ENCODE measurements at regions of chrX and their contacts with region 1.

Region 1: DNA sequence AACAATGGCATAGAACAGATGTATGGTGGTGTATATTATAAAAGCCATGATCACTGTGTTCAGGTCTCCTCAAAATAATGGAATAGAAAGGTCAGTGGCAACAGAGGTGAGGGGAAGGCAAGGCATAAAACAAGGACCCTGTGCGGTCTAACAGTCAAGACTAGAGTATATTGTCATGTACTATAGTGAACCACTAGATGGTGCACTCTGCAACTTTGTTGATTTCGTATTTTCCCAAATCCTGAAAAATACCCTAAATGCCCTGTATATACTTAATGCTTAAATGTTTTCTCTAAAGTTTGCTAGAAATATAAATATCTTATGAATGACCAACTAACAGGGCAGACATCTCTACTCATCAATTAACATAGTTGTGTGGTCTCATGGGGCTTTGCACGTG is 453.0 kb downstream of the PCDH11X start:
- DNase-seq: peak; percentile 2
- ATAC-seq: peak; percentile 51; the same call in 1 of the 2 replicates
- H3K4me3 ChIP-seq: no peak overlapping the region
- H3K27ac ChIP-seq: no peak overlapping the region
- H3K4me1 ChIP-seq: no peaks in the 10 kb centered on the region
- H3K27me3 ChIP-seq: no peaks in the 10 kb centered on the region
- CTCF ChIP-seq: peak; percentile 42
- POLR2A ChIP-seq: no peak
- RAD21 ChIP-seq: peak; percentile 42

Region 2: DNA sequence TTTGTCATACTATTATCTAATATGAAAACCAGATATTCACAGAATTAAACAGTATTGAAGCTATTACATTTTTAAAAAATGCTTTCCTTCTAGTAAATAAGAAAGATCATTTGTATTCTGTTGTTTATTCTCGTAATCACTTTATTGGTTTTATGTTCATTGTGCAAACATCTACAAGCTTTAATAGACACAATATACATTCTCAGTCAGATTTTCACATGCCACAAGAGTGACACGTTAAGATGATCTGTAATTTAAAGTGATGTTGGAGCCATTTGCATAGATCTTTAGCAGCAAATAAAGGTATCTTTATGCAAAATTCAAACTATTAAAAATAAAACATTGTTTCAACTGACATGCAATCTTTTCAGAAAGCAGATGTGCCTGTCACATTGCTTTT is 16.9 kb after region 1 on chrX:
- CTCF ChIA-PET with region 1: no interaction called
- POLR2A ChIA-PET with region 1: no interaction called
- dilution Hi-C with region 1: no loop called
- in situ Hi-C with region 1: no loop called
- intact Hi-C with region 1: no loop called
- DNase-seq: no peak
- ATAC-seq: no peak
- H3K4me3 ChIP-seq: no peak overlapping the region
- H3K27ac ChIP-seq: no peak overlapping the region
- H3K4me1 ChIP-seq: no peaks in the 10 kb centered on the region
- H3K27me3 ChIP-seq: no peaks in the 10 kb centered on the region
- CTCF ChIP-seq: no peak
- POLR2A ChIP-seq: no peak
- RAD21 ChIP-seq: no peak

Region 3: GRCh38 chrX:92260099-92260498 is 27.9 kb after region 1 on chrX:
- CTCF ChIA-PET with region 1: no interaction called
- POLR2A ChIA-PET with region 1: no interaction called
- dilution Hi-C with region 1: no loop called
- in situ Hi-C with region 1: no loop called
- intact Hi-C with region 1: no loop called
- DNase-seq: no peak
- ATAC-seq: no peak
- H3K4me3 ChIP-seq: no peak overlapping the region
- H3K27ac ChIP-seq: no peak overlapping the region
- H3K4me1 ChIP-seq: no peaks in the 10 kb centered on the region
- H3K27me3 ChIP-seq: no peaks in the 10 kb centered on the region; the same call in 1 of the 2 replicates
- CTCF ChIP-seq: no peak
- POLR2A ChIP-seq: no peak
- RAD21 ChIP-seq: no peak

Region 4: DNA sequence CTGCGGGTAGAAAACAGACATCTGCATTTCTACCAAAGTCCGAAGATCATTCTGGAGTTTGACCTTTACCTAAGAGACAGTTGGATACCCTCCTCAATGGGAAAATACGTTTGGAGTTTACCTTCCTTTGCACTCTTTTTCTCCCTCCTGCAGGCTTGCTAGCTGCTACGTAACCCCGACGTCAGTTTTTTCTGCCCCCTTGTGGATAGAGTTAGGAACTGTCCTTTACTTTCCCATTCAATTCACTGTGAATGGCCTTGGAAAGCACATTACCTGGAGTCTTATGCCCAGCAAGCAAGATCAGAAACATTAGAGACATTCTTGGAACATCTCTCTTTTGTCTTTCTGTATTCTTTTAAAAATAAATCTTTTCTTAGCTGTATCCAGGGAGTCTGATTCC is 1190.5 kb after region 1 on chrX:
- CTCF ChIA-PET with region 1: no interaction called
- POLR2A ChIA-PET with region 1: no interaction called
- dilution Hi-C with region 1: no loop called
- in situ Hi-C with region 1: no loop called
- intact Hi-C with region 1: loop called (anchors 10 kb)
- DNase-seq: peak; percentile 1
- ATAC-seq: no peak
- H3K4me3 ChIP-seq: no peak overlapping the region
- H3K27ac ChIP-seq: no peak overlapping the region
- H3K4me1 ChIP-seq: no peaks in the 10 kb centered on the region
- H3K27me3 ChIP-seq: peaks cover 2% of the 10 kb centered on the region; the same call in 1 of the 2 replicates
- CTCF ChIP-seq: peak; percentile 43
- POLR2A ChIP-seq: no peak
- RAD21 ChIP-seq: no peak

Region 5: GRCh38 chrX:93454509-93454908 is 1222.3 kb after region 1 on chrX:
- CTCF ChIA-PET with region 1: no interaction called
- POLR2A ChIA-PET with region 1: no interaction called
- dilution Hi-C with region 1: no loop called
- in situ Hi-C with region 1: no loop called
- intact Hi-C with region 1: no loop called
- DNase-seq: no peak
- ATAC-seq: no peak
- H3K4me3 ChIP-seq: no peak overlapping the region
- H3K27ac ChIP-seq: no peak overlapping the region
- H3K4me1 ChIP-seq: no peaks in the 10 kb centered on the region
- H3K27me3 ChIP-seq: no peaks in the 10 kb centered on the region
- CTCF ChIP-seq: no peak
- POLR2A ChIP-seq: no peak
- RAD21 ChIP-seq: no peak

Region 6: DNA sequence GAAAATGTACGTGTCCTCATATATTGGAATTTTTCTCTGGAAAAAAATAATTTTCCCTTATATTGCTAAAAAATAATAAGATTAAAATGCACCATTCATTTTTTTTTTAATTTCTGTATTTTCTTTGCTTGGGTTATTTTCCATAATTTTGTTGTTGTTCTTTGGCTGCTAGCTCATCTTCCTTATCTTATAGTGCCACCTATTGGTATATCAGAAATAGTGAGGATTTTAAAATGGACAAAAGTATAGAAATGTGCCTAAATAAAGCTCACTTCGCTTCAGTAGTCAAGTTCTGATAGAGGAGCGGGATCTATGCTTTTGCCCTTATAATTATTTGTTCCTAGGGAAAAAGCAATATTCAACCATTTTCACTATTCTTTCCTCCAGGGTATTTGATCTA is 1306.4 kb after region 1 on chrX:
- CTCF ChIA-PET with region 1: no interaction called
- POLR2A ChIA-PET with region 1: no interaction called
- dilution Hi-C with region 1: no loop called
- in situ Hi-C with region 1: no loop called
- intact Hi-C with region 1: loop called (anchors 5 kb)
- DNase-seq: no peak
- ATAC-seq: no peak
- H3K4me3 ChIP-seq: no peak overlapping the region
- H3K27ac ChIP-seq: no peak overlapping the region
- H3K4me1 ChIP-seq: no peaks in the 10 kb centered on the region
- H3K27me3 ChIP-seq: no peaks in the 10 kb centered on the region; the same call in 1 of the 2 replicates
- CTCF ChIP-seq: peak; percentile 46
- POLR2A ChIP-seq: no peak
- RAD21 ChIP-seq: peak; percentile 48